ENCODE measurements at regions of chr14 and their contacts with region 1.

Region 1: GRCh38 chr14:58239244-58240195 is 5.1 kb upstream of the PSMA3 start:
- DNase-seq: peak; percentile 66 to 89 (median 84)
- ATAC-seq: peak; percentile 39
- H3K4me3 ChIP-seq: peak overlapping the region; percentile 78
- H3K4me3 Mint-ChIP-seq: no peak overlapping the region
- H3K27ac ChIP-seq: peak overlapping the region; percentile 75
- H3K27ac Mint-ChIP-seq: no peak overlapping the region
- H3K4me1 ChIP-seq: peaks cover 8 to 9% of the 10 kb centered on the region in 2 donors
- H3K4me1 Mint-ChIP-seq: peaks cover 11 to 30% (median 27%) of the 10 kb centered on the region in 7 donors
- H3K27me3 ChIP-seq: no peaks in the 10 kb centered on the region
- H3K27me3 Mint-ChIP-seq: peaks cover 0 to 2% (median 0%) of the 10 kb centered on the region in 5 donors

Region 2: DNA sequence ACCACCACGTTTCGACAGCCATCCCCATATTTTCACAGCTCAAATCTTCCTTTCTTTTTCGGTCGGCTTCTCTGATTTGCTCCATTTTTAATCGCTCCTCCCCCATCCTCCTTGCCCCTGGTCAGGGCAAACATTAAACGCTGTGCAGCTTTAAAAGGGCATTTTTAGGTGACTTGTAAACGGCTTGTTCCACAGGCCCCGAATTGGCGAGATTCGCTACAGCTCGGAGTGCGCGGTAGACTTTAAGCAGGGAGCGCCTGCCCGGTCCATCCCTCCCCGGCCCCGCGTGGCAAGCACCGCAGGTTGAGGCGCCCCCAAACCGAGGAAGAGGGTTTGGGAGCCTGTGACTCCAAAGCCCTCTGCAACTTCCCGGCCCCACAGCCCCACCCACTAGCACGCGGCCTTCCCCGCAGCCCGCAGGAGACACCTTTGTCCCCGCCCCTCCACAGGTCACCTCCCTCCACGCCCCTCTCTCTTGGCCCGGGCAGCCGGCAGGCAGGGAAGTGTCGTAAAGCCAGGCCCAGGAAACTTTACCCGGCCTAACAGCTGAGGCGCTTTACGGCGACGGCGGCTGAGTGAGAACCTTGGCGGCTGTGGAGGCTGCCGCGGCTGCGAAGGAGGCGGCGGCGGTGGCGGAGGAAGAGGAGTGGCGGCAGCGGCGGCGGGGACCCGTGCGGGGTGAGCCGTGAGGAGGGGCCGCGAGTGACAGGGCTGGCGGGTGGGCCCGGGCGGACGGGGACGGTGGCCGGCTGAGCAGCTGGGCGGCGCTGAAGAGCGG is 849.3 kb before region 1 on chr14 and contains the start of gene NAA30:
- CTCF ChIA-PET with region 1: no interaction called
- POLR2A ChIA-PET with region 1: no interaction called
- intact Hi-C with region 1: loop called in 1 of 2 experiments (anchors 1 kb)
- DNase-seq: peak; percentile 80 to 97 (median 92)
- ATAC-seq: peak; percentile 98
- H3K4me3 ChIP-seq: peak within 1 kb of the TSS; percentile 68
- H3K4me3 Mint-ChIP-seq: peak within 1 kb of the TSS; percentile 86 to 98 (median 94)
- H3K27ac ChIP-seq: peak within 1 kb of the TSS; percentile 72
- H3K27ac Mint-ChIP-seq: peak within 1 kb of the TSS; percentile 88 to 99 (median 95)
- H3K4me1 ChIP-seq: peaks cover 11 to 13% of the 10 kb centered on the region in 2 donors
- H3K4me1 Mint-ChIP-seq: peaks cover 31 to 58% (median 40%) of the 10 kb centered on the region in 7 donors
- H3K27me3 ChIP-seq: no peaks in the 10 kb centered on the region
- H3K27me3 Mint-ChIP-seq: peaks cover 0 to under 1% (median 0%) of the 10 kb centered on the region in 5 donors
- total RNA-seq, gene NAA30: 14.6 to 19.6 (median 16.2) TPM

Region 3: GRCh38 chr14:58014778-58015177 is 224.7 kb before region 1 on chr14:
- CTCF ChIA-PET with region 1: no interaction called
- POLR2A ChIA-PET with region 1: no interaction called
- intact Hi-C with region 1: no loop called
- DNase-seq: no peak
- ATAC-seq: no peak
- H3K4me3 ChIP-seq: no peak overlapping the region
- H3K4me3 Mint-ChIP-seq: no peak overlapping the region
- H3K27ac ChIP-seq: no peak overlapping the region
- H3K27ac Mint-ChIP-seq: no peak overlapping the region
- H3K4me1 ChIP-seq: no peaks in the 10 kb centered on the region
- H3K4me1 Mint-ChIP-seq: no peaks in the 10 kb centered on the region
- H3K27me3 ChIP-seq: no peaks in the 10 kb centered on the region
- H3K27me3 Mint-ChIP-seq: peaks cover 0 to 32% (median 11%) of the 10 kb centered on the region in 5 donors

Region 4: GRCh38 chr14:58213176-58213575 is 26.3 kb before region 1 on chr14:
- CTCF ChIA-PET with region 1: interaction called, 5 read pairs
- POLR2A ChIA-PET with region 1: interaction called, 8 read pairs
- intact Hi-C with region 1: loop called in 1 of 2 experiments (anchors 2 kb)
- DNase-seq: no peak
- ATAC-seq: no peak
- H3K4me3 ChIP-seq: no peak overlapping the region
- H3K4me3 Mint-ChIP-seq: no peak overlapping the region
- H3K27ac ChIP-seq: no peak overlapping the region
- H3K27ac Mint-ChIP-seq: no peak overlapping the region
- H3K4me1 ChIP-seq: no peaks in the 10 kb centered on the region
- H3K4me1 Mint-ChIP-seq: peaks cover 0 to 12% (median 4%) of the 10 kb centered on the region in 7 donors
- H3K27me3 ChIP-seq: no peaks in the 10 kb centered on the region
- H3K27me3 Mint-ChIP-seq: no peaks in the 10 kb centered on the region

Measured in naive thymus-derived CD4-positive, alpha-beta T cell (primary cell).